Activated naive CD4-positive, alpha-beta T cell treated with anti-CD3 and anti-CD28 coated beads for 36 hours (primary cell): ENCODE measurements at regions of chr1 and their contacts with region 1.

Region 1: DNA sequence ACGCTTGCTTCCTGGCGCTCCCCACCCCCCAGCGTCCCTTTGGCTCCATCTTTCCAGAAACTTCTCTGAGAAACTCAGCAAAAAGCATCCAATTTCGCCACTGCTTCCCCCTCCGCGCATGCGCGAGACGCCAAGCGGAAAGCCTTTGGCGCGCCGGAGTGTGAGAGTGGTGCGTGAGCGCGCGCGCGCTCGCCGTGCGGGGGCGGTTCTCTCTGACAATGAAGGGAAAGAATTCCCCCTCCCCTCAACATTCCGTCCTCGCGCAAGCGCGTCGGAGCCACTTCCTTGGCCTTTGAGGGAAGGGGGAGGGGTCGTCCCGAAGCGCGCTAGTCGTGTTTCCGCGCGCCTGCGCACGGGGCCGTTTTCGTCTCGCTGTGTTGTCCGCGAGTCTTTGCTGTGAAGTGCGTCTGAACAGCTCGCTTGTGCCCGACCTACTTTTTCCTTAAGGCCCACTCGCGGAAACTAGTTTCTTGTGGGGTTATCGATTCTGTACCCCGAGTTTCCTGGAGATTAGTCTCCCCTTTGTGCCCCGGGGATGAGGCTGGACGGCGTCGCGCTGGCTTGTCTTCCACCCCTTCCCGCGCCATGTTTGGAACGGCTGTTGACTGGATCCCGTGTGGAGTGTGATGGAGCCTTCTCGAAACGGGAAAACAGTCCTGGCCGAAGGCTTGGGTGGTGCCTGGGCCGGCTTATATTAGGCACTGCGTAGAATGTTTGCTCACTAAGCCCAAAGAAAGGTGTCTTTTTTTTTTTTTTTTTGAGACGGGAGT is 11.6 kb upstream of the SPEN start:
- DNase-seq: peak; percentile 100
- H3K4me3 Mint-ChIP-seq: peak overlapping the region; percentile 86
- H3K27ac Mint-ChIP-seq: peak overlapping the region; percentile 95
- H3K4me1 Mint-ChIP-seq: peaks cover 27% of the 10 kb centered on the region
- H3K27me3 Mint-ChIP-seq: no peaks in the 10 kb centered on the region

Region 2: DNA sequence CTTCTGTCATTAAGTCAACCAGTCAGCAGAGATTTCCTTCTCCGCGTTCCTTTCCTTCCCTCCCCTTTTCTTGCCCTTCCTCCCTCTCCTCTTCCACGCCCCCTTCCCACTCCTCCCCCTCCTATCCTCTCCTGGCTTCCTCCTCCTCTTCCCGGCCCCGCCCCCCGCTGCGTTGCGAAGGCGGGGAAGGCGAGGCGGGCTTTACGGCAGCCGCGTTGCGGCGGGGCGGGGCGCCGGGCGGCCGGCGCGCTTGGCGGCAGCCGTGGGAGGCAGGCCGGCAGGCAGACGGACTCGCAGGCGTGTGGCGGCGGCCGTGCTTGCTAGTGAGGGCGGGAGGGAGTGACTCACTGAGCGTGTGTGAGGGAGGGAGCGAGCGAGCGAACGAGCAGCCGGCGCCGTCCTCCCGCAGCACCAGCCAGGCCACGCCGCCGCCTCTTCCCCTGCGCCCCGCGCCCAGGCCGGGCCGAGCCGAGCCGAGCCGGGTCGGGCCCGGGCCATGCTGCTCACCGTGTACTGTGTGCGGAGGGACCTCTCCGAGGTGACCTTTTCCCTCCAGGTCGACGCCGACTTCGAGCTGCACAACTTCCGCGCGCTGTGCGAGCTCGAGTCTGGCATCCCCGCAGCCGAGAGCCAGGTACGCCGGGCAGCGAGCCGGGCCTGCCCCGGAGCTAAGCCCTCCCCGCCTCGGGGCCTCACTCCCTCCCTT is 218.6 kb before region 1 on chr1 and contains the start of gene DDI2:
- CTCF ChIA-PET with region 1: no interaction called
- intact Hi-C with region 1: loop called (anchors 5 kb)
- DNase-seq: peak; percentile 96
- H3K4me3 Mint-ChIP-seq: peak within 1 kb of the TSS; percentile 90
- H3K27ac Mint-ChIP-seq: peak within 1 kb of the TSS; percentile 93
- H3K4me1 Mint-ChIP-seq: peaks cover 42% of the 10 kb centered on the region
- H3K27me3 Mint-ChIP-seq: no peaks in the 10 kb centered on the region
- total RNA-seq, gene DDI2: 19.6 to 20.7 TPM

Region 3: GRCh38 chr1:15775706-15776105 is 60.2 kb before region 1 on chr1:
- CTCF ChIA-PET with region 1: no interaction called
- intact Hi-C with region 1: no loop called
- DNase-seq: no peak
- H3K4me3 Mint-ChIP-seq: no peak overlapping the region
- H3K27ac Mint-ChIP-seq: no peak overlapping the region
- H3K4me1 Mint-ChIP-seq: no peaks in the 10 kb centered on the region
- H3K27me3 Mint-ChIP-seq: no peaks in the 10 kb centered on the region

Region 4: DNA sequence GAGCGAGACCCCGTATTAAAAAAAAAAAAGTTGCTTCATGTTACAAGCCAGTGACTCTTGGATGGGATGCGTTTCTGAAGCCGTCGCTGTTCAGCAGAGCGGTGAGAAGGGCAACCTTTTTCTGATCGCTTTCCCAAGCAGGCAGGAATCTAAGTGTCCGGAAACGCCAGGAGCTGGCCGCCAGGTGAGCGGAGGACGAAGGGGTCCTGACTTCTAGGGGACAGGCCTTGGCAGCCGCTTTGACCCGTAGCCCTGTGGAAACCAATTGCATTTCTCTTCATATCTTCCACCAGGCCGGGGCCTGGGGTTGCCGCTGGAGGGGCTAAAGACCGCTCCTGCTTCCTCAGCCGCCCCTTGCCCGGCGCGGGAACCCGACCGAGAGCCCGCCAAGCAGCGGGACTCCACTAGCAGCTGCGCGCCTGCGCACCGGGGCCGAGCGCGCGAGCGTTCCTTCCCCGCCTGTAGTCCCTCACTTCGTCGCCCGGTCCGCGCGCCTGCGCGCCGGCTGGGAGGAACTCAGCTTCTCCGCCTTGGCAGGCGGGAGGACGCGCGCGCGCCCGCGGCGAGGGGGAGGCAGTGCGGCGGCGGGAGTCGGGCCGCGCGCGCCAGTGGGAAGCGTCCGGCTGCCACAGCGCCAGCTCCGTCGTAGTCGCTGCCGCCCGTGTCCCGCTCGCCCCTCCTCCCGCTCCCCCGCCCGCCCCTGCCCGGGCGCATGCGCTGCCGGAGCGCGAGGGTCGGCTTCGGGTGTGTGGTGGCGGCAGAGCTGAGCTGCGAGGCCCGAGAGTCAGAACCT is 11.4 kb after region 1 on chr1 and contains the start of gene SPEN:
- CTCF ChIA-PET with region 1: interaction called, 5 read pairs
- intact Hi-C with region 1: loop called (anchors 1 kb)
- DNase-seq: peak; percentile 97
- H3K4me3 Mint-ChIP-seq: peak within 1 kb of the TSS; percentile 97
- H3K27ac Mint-ChIP-seq: peak within 1 kb of the TSS; percentile 97
- H3K4me1 Mint-ChIP-seq: peaks cover 44% of the 10 kb centered on the region
- H3K27me3 Mint-ChIP-seq: no peaks in the 10 kb centered on the region
- total RNA-seq, gene SPEN: 30.7 to 33.7 TPM

Region 5: GRCh38 chr1:15902882-15903281 is 67.0 kb after region 1 on chr1:
- CTCF ChIA-PET with region 1: no interaction called
- intact Hi-C with region 1: loop called (anchors 5 kb)
- DNase-seq: no peak
- H3K4me3 Mint-ChIP-seq: no peak overlapping the region
- H3K27ac Mint-ChIP-seq: no peak overlapping the region
- H3K4me1 Mint-ChIP-seq: peaks cover 37% of the 10 kb centered on the region
- H3K27me3 Mint-ChIP-seq: no peaks in the 10 kb centered on the region

Region 6: DNA sequence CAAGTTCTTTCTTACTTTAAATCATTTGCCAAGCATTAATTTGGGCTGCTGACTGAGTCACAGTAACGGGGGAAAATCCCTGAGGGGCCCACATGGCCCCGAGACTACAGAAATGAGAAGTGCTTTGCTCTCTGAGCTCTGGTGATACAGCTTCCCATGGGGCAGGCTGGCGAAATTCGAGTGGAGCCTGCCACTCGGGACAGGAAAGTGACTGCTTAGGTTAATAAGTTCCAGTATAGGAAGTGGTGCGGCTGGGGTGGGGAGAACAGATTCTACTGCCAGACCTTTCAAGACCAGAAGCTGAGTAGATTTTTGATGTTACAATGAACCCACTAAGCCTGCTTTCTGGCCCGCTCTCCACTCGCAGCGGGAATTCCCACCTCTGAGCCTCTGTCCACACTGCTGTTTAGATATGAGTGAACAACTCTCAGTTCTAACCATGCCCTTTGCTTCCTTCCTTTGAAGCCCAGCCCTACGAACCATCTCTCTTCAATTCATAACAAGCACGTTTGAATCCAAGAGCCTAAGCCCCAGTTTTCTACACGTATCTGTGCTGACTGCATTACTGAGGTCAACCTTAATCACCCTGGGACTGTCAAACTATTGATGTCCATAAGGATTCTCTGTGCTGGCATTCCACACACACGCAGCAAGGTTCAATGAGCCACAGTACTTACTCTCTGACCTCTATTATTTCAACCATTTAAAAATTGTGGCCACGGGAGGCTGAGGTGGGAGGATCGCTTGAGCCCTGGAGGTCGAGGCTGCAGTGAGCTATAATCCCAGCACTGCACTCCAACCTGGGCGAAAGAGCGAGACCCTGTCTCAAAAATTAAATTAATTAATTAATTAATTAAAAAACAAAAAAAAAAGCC is 130.4 kb after region 1 on chr1:
- CTCF ChIA-PET with region 1: no interaction called
- intact Hi-C with region 1: loop called (anchors 1 kb)
- DNase-seq: peak; percentile 94
- H3K4me3 Mint-ChIP-seq: peak overlapping the region; percentile 68
- H3K27ac Mint-ChIP-seq: peak overlapping the region; percentile 97
- H3K4me1 Mint-ChIP-seq: peaks cover 80% of the 10 kb centered on the region
- H3K27me3 Mint-ChIP-seq: no peaks in the 10 kb centered on the region

Region 7: DNA sequence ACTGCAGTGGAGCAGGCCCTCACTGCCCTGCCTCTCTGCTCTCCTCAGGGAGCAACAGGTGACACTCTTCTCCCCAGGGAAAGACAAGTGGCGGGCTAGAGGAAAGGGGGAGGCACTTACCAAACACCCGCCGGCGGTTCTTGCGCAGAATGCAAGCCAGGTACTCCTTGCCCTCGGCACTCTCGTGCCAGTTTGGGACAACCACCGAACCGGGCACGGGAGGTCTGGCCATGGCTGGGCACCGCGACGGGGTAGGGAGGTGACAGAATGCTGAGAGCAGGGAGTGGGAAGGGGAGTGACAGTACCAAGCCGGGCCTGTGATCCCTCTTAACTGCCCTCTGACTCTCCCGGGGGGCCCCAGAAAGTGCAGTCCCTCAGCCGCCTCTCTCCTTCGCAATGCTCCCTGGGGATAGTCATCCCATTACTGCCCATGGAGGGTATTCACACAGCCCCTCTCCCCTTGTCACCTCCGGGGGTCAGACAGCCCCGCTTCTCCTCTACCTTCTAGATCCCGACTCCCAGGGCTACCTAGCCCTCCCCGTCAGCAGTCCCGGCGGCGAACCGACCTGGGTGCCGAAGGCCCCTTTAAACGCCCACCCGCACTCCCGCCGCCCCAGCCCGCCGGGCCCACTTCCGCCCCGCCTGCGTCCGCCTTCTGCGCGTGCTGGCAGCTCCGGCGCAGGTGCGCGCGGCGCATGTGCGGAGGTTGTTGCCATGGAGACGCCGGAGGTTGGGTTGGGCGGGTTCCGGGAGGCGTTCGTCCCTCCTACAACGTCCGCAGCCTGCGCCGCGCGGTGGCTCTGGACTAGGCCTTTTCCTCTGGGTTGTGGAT is 400.8 kb after region 1 on chr1 and contains the start of gene CPLANE2:
- CTCF ChIA-PET with region 1: no interaction called
- intact Hi-C with region 1: loop called (anchors 10 kb)
- DNase-seq: peak; percentile 98
- H3K4me3 Mint-ChIP-seq: peak within 1 kb of the TSS; percentile 84
- H3K27ac Mint-ChIP-seq: peak within 1 kb of the TSS; percentile 88
- H3K4me1 Mint-ChIP-seq: peaks cover 14% of the 10 kb centered on the region
- H3K27me3 Mint-ChIP-seq: no peaks in the 10 kb centered on the region
- total RNA-seq, gene CPLANE2: 2.7 to 4.0 TPM